ENCODE measurements at regions of chrX and their contacts with region 1.

Region 1: DNA sequence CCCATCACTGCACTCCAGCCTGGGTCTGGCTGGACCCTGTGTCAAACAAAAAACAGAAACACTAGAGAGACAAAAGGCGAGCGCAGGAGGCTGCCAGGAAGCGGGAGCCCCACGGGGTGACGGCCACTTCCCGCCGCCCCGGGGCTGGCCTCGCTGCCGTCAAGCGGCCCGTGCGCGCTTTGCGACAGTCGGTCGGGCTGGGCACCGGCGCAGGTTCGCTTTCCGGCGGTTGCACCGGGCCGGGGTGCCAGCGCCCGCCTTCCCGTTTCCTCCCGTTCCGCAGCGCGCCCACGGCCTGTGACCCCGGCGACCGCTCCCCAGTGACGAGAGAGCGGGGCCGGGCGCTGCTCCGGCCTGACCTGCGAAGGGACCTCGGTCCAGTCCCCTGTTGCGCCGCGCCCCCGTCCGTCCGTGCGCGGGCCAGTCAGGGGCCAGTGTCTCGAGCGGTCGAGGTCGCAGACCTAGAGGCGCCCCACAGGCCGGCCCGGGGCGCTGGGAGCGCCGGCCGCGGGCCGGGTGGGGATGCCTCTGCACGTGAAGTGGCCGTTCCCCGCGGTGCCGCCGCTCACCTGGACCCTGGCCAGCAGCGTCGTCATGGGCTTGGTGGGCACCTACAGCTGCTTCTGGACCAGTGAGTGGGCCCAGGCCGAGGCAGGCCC is at the start of gene TAFAZZIN:
- DNase-seq: peak; percentile 87
- ATAC-seq: peak; percentile 73
- H3K4me3 Mint-ChIP-seq: peak within 1 kb of the TSS; percentile 86
- H3K27ac Mint-ChIP-seq: peak within 1 kb of the TSS; percentile 94
- H3K4me1 Mint-ChIP-seq: peaks cover 13% of the 10 kb centered on the region
- H3K27me3 Mint-ChIP-seq: no peaks in the 10 kb centered on the region
- total RNA-seq, gene TAFAZZIN: 43.8 to 49.0 TPM

Region 2: GRCh38 chrX:154063234-154063633 is 348.2 kb before region 1 on chrX:
- CTCF ChIA-PET with region 1: no interaction called
- POLR2A ChIA-PET with region 1: no interaction called
- intact Hi-C with region 1: no loop called
- DNase-seq: peak; percentile 19
- ATAC-seq: peak; percentile 33
- H3K4me3 Mint-ChIP-seq: no peak overlapping the region
- H3K27ac Mint-ChIP-seq: no peak overlapping the region
- H3K4me1 Mint-ChIP-seq: peaks cover 77% of the 10 kb centered on the region
- H3K27me3 Mint-ChIP-seq: no peaks in the 10 kb centered on the region

Region 3: DNA sequence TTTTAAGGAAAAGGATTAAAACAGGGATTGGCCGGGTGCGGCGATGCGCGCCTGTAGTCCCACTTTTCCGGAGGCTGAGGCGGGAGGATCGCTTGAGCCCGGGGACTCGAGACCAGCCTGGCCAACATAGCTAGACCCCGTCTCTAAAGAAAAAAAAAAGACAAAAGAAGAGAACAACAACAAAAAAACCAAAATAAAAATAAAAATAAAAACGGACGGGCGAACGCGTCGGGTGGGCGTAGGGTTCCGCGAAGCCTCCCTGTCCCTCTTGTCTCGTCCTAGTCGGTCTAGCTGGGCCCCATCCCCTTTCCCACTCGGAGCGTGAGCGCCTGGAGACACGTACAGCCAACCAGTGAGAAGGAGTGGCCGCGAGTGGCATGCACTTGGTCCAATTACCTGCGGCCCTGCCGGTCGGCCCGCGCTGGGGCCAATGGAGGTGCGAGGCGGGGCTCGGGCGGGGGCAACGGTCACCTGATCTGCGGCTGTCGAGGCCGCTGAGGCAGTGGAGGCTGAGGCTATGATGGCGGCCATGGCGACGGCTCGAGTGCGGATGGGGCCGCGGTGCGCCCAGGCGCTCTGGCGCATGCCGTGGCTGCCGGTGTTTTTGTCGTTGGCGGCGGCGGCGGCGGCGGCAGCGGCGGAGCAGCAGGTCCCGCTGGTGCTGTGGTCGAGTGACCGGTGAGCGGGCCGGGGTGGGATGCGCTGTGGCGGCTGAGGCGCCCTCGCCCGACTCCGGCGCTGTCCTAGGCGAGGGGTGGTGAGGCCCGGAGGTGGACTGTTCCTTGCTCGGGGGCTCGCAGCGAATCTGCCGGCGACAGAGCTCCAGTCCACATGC is 16.9 kb after region 1 on chrX and contains the start of gene ATP6AP1:
- CTCF ChIA-PET with region 1: no interaction called
- POLR2A ChIA-PET with region 1: interaction called, 4 read pairs
- intact Hi-C with region 1: loop called (anchors 1 to 2 kb)
- DNase-seq: peak; percentile 94
- ATAC-seq: peak; percentile 99
- H3K4me3 Mint-ChIP-seq: peak within 1 kb of the TSS; percentile 77
- H3K27ac Mint-ChIP-seq: peak within 1 kb of the TSS; percentile 65
- H3K4me1 Mint-ChIP-seq: peaks cover 26% of the 10 kb centered on the region
- H3K27me3 Mint-ChIP-seq: no peaks in the 10 kb centered on the region
- total RNA-seq, gene ATP6AP1: 25.6 to 28.6 TPM

Region 4: DNA sequence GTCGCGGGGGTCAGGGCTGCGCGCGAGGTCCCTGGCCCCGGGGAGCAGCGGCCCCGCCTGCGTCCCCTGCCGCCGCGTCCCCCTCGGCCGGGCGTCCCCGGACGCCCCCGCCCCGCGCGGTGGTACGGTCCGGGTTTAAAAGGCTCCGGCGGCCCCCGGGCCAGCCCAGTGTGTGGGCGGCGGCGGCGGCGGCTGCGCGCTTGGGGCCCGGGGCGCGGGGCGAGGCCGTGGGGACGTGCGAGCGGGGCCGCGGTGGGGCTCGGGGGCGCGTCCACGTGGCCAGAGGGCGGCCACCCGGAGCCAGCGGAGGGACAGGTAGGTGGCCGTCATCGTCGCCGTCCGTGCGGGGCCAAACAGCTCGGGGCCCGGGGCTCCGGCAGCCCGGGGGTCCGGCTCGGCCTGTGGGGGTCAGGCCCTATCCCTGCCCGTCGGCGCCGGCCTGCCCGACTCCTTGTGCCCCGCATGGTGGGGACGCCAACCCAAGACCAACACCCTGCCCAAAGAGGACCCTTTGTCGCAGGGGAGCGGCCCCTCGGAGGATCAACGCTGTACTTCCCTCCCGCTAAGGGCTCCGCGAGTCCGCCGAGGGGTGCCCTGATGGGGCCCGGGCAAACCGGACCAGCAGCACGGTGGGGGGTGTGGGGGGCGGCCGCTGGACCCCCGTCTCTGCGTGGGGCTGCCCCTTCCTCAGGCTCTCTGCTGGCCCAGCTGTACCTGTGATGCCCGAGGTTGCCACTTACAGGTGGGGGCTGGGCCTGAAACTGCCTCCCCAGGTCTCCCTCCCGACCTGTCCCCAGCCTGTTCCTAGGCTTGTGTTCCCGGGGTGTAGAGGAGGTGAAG is 46.9 kb after region 1 on chrX and contains the start of gene PLXNA3:
- CTCF ChIA-PET with region 1: no interaction called
- POLR2A ChIA-PET with region 1: no interaction called
- intact Hi-C with region 1: loop called in 1 of 2 experiments (anchors 5 kb)
- DNase-seq: peak; percentile 66
- ATAC-seq: peak; percentile 54
- H3K4me3 Mint-ChIP-seq: peak within 1 kb of the TSS; percentile 88
- H3K27ac Mint-ChIP-seq: peak within 1 kb of the TSS; percentile 91
- H3K4me1 Mint-ChIP-seq: peaks cover 5% of the 10 kb centered on the region
- H3K27me3 Mint-ChIP-seq: no peaks in the 10 kb centered on the region
- total RNA-seq, gene PLXNA3: 23.2 to 25.3 TPM

Measured in activated CD4-positive, alpha-beta T cell treated with anti-CD3 and anti-CD28 coated beads for 36 hours (primary cell).